Common myeloid progenitor, CD34-positive (primary cell): ENCODE measurements at regions of chr1 and their contacts with region 1.

Region 1: DNA sequence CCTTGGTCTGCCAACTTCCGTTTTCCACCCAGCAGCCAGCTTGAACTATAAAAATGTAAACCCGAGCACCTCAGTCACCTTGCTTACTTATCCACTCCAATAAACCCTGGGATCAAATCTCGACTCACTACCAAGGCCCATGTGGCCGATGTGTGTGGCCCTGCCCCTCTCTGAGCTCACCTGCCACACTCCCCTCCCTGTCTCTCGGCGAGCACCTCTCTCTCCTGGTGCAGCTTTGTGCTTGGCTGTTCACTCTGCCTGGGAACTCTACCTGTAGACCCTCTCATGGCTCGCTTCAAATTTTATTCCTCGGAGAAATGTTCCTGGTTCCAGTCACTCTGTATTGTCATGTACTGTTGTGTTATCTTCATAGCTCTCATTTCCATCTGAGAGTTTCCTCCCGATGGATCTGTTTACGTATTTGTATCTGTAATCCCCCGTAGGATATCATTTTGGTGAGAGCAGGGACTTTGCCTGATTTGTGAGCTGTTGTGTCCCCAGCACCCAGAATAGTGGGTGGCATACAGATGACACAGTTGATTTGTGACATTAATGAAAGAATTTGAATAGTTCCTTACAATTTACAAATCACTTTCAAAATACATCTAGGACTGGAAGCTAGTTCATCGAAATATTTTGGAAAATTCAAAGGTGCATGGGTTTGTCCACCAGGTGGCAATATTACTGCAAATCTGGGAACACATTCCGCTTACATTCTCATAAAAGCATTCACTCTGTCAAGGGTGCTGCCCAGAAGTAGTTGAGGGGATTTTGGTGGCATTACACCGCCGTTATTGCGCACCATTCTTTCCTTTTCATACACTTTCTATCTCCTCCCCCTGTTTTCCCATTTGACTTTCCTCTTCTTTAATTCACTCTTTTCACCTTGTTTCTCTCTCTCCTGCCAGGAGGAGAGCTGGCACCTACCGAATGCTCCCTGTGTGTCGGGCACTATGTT is 95.3 kb downstream of the ABCA4 start:
- DNase-seq: peak; percentile 64 to 77 (median 74)
- H3K4me3 ChIP-seq: no peak overlapping the region
- H3K27ac ChIP-seq: no peak overlapping the region
- H3K4me1 ChIP-seq: peaks cover 0 to 6% (median 2%) of the 10 kb centered on the region in 4 experiments
- H3K27me3 ChIP-seq: peaks cover 0 to 6% (median 0%) of the 10 kb centered on the region in 5 experiments

Region 2: GRCh38 chr1:93995837-93996536 is 29.7 kb before region 1 on chr1:
- CTCF ChIA-PET with region 1: no interaction called
- POLR2A ChIA-PET with region 1: no interaction called
- DNase-seq: peak in 2 of 3 donors; percentile 18 to 28
- H3K4me3 ChIP-seq: no peak overlapping the region
- H3K27ac ChIP-seq: no peak overlapping the region
- H3K4me1 ChIP-seq: no peaks in the 10 kb centered on the region
- H3K27me3 ChIP-seq: peaks cover 0 to 10% (median 0%) of the 10 kb centered on the region in 5 experiments

Region 3: GRCh38 chr1:94045465-94046056 is 19.9 kb after region 1 on chr1:
- CTCF ChIA-PET with region 1: interaction called, 225 read pairs
- POLR2A ChIA-PET with region 1: no interaction called
- DNase-seq: peak; percentile 58 to 70 (median 68)
- H3K4me3 ChIP-seq: peak overlapping the region in 6 of 7 experiments; percentile 16 to 73 (median 48)
- H3K27ac ChIP-seq: no peak overlapping the region
- H3K4me1 ChIP-seq: peaks cover 0 to 16% (median 8%) of the 10 kb centered on the region in 4 experiments
- H3K27me3 ChIP-seq: peaks cover 0 to 5% (median 0%) of the 10 kb centered on the region in 5 experiments

Region 4: GRCh38 chr1:94463765-94464330 is 438.2 kb after region 1 on chr1:
- CTCF ChIA-PET with region 1: interaction called, 10 read pairs
- POLR2A ChIA-PET with region 1: no interaction called
- DNase-seq: peak; percentile 62 to 82 (median 78)
- H3K4me3 ChIP-seq: no peak overlapping the region
- H3K27ac ChIP-seq: no peak overlapping the region
- H3K4me1 ChIP-seq: peaks cover 0 to 13% (median under 1%) of the 10 kb centered on the region in 4 experiments
- H3K27me3 ChIP-seq: no peaks in the 10 kb centered on the region